ENCODE measurements at regions of chr7 and their contacts with region 1.

Region 1: GRCh38 chr7:74606101-74606908 is 51.2 kb upstream of the GTF2I start:
- DNase-seq: peak; percentile 65
- H3K4me3 ChIP-seq: peak overlapping the region; percentile 0 to 55 (median 32)
- H3K27ac ChIP-seq: peak overlapping the region; percentile 37 to 73 (median 62)
- H3K4me1 ChIP-seq: peaks cover 6 to 30% (median 23%) of the 10 kb centered on the region in 4 donors
- H3K27me3 ChIP-seq: no peaks in the 10 kb centered on the region
- CTCF ChIP-seq: peak in 1 of 5 experiments; percentile 5
- EP300 ChIP-seq: no peak
- POLR2A ChIP-seq: no peak

Region 2: GRCh38 chr7:73364006-73364728 is 1242.1 kb before region 1 on chr7:
- in situ Hi-C with region 1: no loop called
- intact Hi-C with region 1: no loop called
- DNase-seq: no peak
- H3K4me3 ChIP-seq: no peak overlapping the region
- H3K27ac ChIP-seq: no peak overlapping the region
- H3K4me1 ChIP-seq: peaks cover 0 to under 1% (median 0%) of the 10 kb centered on the region in 4 donors
- H3K27me3 ChIP-seq: peaks cover 24% of the 10 kb centered on the region
- CTCF ChIP-seq: no peak
- EP300 ChIP-seq: no peak
- POLR2A ChIP-seq: no peak

Region 3: DNA sequence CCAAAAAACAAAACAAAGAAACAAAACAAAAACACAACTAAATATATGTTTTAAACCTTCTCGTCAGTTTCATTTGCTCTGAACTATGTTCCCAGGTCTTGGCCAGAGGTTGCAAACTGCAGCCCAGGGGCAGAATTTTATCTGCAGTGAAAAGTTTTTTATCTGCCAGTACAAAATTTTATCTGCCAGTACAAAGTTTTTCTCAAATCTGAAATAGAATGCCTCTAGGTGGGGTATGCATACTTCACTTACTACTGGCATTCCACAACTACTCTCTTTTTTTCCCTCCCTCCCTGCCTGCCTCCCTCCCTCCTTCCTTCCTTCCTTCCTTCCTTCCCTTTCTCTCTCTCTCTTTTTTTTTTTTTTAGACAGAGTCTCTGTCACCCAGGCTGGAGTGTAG is 826.8 kb before region 1 on chr7:
- in situ Hi-C with region 1: no loop called
- intact Hi-C with region 1: no loop called
- DNase-seq: no peak
- H3K4me3 ChIP-seq: no peak overlapping the region
- H3K27ac ChIP-seq: peak overlapping the region in 1 of 4 donors; percentile 7
- H3K4me1 ChIP-seq: peaks cover 0 to 16% (median 8%) of the 10 kb centered on the region in 4 donors
- H3K27me3 ChIP-seq: no peaks in the 10 kb centered on the region
- CTCF ChIP-seq: no peak
- EP300 ChIP-seq: no peak
- POLR2A ChIP-seq: no peak

Region 4: GRCh38 chr7:74514131-74514591 is 92.1 kb before region 1 on chr7:
- in situ Hi-C with region 1: no loop called
- intact Hi-C with region 1: no loop called
- DNase-seq: no peak
- H3K4me3 ChIP-seq: no peak overlapping the region
- H3K27ac ChIP-seq: no peak overlapping the region
- H3K4me1 ChIP-seq: no peaks in the 10 kb centered on the region
- H3K27me3 ChIP-seq: no peaks in the 10 kb centered on the region
- CTCF ChIP-seq: no peak
- EP300 ChIP-seq: no peak
- POLR2A ChIP-seq: no peak

Region 5: GRCh38 chr7:74569501-74570075 is 36.7 kb before region 1 on chr7:
- in situ Hi-C with region 1: no loop called
- intact Hi-C with region 1: no loop called
- DNase-seq: no peak
- H3K4me3 ChIP-seq: no peak overlapping the region
- H3K27ac ChIP-seq: no peak overlapping the region
- H3K4me1 ChIP-seq: peaks cover 0 to 7% (median 3%) of the 10 kb centered on the region in 4 donors
- H3K27me3 ChIP-seq: no peaks in the 10 kb centered on the region
- CTCF ChIP-seq: no peak
- EP300 ChIP-seq: no peak
- POLR2A ChIP-seq: no peak

Region 6: GRCh38 chr7:74672343-74672915 is 66.1 kb after region 1 on chr7:
- in situ Hi-C with region 1: no loop called
- intact Hi-C with region 1: loop called (anchors 10 kb)
- DNase-seq: no peak
- H3K4me3 ChIP-seq: no peak overlapping the region
- H3K27ac ChIP-seq: peak overlapping the region in 1 of 4 donors; percentile 2
- H3K4me1 ChIP-seq: peaks cover 0 to 21% (median 2%) of the 10 kb centered on the region in 4 donors
- H3K27me3 ChIP-seq: no peaks in the 10 kb centered on the region
- CTCF ChIP-seq: no peak
- EP300 ChIP-seq: no peak
- POLR2A ChIP-seq: no peak

Measured in transverse colon (tissue), 4 donors.